Activated CD8-positive, alpha-beta T cell treated with anti-CD3 and anti-CD28 coated beads for 36 hours (primary cell): ENCODE measurements at regions of chr1 and their contacts with region 1.

Region 1: DNA sequence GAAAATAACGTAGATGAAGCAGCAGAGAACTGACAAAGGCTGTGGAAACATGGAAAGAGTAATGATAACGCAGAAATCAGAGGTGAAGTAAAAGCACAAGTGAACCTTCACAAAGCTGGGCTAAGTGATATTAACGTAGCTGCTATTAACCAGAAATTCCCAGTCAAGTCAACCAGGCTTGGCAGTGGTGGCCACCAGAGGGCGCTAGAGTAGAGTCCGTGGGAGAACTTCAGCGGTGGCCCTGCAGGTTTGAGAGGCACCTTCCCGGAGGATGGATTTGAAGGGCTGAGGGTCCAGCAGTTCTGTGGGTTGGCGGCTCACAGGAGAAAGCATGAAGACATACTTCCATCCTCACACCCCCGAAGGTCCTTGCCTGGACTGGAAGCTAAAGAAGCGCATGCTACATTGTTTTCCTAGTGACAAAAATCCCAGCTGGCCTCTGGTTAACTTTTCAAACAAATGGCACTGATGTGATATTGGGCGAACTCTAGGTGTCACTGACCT is 81.7 kb upstream of the ZNF648 start:
- DNase-seq: peak; percentile 91
- ATAC-seq: peak; percentile 58
- H3K4me3 Mint-ChIP-seq: no peak overlapping the region
- H3K27ac Mint-ChIP-seq: no peak overlapping the region
- H3K4me1 Mint-ChIP-seq: peaks cover 8% of the 10 kb centered on the region
- H3K27me3 Mint-ChIP-seq: peaks cover 6% of the 10 kb centered on the region
- CTCF ChIP-seq: peak; percentile 89

Region 2: DNA sequence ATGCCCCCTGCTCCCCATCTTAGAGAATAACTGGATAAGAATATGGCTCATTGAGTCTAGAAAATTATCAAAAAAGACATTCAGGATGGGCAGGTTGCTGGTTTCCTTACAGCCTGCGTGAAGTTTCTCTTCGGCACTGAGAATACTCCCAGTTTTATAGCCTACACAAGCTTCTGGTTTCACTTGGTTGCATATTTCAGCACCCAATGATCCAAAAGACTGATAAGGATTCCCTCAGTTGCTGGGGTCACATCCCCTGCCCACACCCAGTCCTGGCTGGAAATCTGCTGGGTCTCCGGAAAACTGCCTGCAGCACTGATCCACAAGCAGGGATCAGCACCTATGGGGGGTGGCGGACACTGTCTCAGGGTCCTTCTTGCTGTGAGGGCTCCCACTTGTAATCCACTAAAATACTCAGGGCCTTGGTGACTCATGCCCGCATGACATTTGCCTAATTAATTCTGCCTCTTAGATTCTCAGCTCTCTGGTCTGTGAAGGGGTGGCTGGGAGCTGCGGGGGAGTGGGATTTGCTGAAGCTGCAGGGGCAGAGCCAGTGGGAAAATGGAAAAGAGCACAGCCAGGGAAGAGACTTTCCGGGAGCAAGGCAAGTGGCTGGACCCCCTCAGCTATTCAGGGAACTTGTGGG is 224.2 kb before region 1 on chr1:
- CTCF ChIA-PET with region 1: no interaction called
- POLR2A ChIA-PET with region 1: no interaction called
- intact Hi-C with region 1: no loop called
- DNase-seq: no peak
- ATAC-seq: no peak
- H3K4me3 Mint-ChIP-seq: no peak overlapping the region
- H3K27ac Mint-ChIP-seq: no peak overlapping the region
- H3K4me1 Mint-ChIP-seq: no peaks in the 10 kb centered on the region
- H3K27me3 Mint-ChIP-seq: peaks cover 6% of the 10 kb centered on the region
- CTCF ChIP-seq: no peak

Region 3: DNA sequence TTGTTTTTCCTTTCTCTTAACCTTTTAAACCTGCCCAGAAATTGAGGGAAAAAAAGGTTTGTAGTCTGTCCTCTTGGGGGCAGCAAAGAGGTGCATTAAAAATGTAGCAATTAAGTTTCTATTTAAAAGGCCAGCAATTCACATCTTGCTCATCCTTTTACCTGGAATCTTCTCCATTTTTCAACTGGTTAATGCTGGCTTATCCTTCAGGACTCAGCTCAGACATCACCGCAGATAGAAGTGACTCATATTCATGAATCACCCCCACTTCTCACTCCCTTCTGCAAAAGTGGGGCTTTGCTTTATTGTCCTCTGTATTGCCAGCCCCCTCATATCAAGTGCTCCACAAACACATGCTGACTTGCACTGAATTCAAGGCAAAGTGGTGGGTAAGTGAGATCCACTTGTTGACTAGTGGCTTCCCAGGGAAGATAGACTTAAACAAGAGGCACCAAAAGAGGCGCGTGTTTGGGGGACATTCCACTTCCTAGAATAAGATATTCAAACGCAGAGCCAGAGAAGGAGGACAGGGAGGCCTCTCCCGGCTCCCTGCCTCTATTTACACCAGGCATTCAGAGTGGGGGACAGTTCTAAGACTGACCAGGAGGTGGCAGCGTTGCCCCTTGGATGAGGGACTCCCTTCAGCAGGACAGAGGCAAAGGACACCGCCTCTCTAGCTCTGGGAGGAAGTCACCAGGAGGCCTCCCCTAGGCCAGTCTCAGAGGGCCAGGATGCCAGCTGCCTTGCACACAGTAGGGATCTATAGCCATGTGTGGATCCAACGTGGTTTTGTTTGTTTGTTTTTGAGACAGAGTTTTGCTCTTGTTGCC is 58.5 kb before region 1 on chr1:
- CTCF ChIA-PET with region 1: interaction called, 51 read pairs
- POLR2A ChIA-PET with region 1: no interaction called
- intact Hi-C with region 1: no loop called
- DNase-seq: peak; percentile 89
- ATAC-seq: peak; percentile 95
- H3K4me3 Mint-ChIP-seq: no peak overlapping the region
- H3K27ac Mint-ChIP-seq: no peak overlapping the region
- H3K4me1 Mint-ChIP-seq: peaks cover 25% of the 10 kb centered on the region
- H3K27me3 Mint-ChIP-seq: no peaks in the 10 kb centered on the region
- CTCF ChIP-seq: peak; percentile 85

Region 4: DNA sequence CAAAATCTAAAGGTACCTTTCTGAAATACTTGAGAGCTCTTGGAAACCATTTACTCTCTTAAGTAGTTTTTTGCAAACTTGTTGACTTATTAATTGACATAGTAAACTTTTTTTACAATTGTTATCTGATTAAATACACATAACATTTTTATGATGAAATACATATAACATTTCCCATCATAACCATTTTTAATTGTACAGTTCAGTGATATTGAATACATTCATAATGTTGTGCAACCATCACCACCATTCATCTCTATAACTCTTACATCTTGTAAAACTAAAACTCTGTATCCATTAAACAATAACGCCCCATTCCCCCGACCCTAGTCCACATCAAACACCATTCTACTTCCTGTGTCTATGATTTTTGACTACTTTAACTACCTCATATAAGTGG is 14.0 kb after region 1 on chr1:
- CTCF ChIA-PET with region 1: interaction called, 22 read pairs
- POLR2A ChIA-PET with region 1: no interaction called
- intact Hi-C with region 1: no loop called
- DNase-seq: no peak
- ATAC-seq: no peak
- H3K4me3 Mint-ChIP-seq: no peak overlapping the region
- H3K27ac Mint-ChIP-seq: no peak overlapping the region
- H3K4me1 Mint-ChIP-seq: peaks cover 5% of the 10 kb centered on the region
- H3K27me3 Mint-ChIP-seq: no peaks in the 10 kb centered on the region
- CTCF ChIP-seq: no peak

Region 5: DNA sequence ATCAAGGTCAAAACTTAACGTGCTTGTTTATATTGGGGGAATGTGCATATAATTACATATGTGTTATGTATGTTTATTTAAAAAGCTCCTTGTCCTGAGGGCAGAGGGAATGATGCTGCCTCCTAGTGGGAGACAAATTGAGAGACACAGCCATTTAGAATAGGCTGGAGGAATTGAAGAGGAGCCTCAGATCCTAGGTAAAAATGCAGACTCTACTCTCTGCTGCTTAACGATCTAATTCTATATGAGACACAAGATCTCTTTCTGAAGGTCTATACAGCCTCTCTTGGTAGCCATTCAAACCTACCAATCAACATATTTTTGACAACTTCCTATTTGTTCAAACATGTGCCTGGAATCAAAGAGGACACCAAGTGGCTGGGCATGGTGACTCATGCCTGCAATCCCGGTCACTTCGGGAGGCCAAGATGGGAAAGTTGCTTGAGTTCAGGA is 54.9 kb after region 1 on chr1:
- CTCF ChIA-PET with region 1: interaction called, 13 read pairs
- POLR2A ChIA-PET with region 1: no interaction called
- intact Hi-C with region 1: no loop called
- DNase-seq: no peak
- ATAC-seq: no peak
- H3K4me3 Mint-ChIP-seq: no peak overlapping the region
- H3K27ac Mint-ChIP-seq: no peak overlapping the region
- H3K4me1 Mint-ChIP-seq: no peaks in the 10 kb centered on the region
- H3K27me3 Mint-ChIP-seq: no peaks in the 10 kb centered on the region
- CTCF ChIP-seq: no peak

Region 6: DNA sequence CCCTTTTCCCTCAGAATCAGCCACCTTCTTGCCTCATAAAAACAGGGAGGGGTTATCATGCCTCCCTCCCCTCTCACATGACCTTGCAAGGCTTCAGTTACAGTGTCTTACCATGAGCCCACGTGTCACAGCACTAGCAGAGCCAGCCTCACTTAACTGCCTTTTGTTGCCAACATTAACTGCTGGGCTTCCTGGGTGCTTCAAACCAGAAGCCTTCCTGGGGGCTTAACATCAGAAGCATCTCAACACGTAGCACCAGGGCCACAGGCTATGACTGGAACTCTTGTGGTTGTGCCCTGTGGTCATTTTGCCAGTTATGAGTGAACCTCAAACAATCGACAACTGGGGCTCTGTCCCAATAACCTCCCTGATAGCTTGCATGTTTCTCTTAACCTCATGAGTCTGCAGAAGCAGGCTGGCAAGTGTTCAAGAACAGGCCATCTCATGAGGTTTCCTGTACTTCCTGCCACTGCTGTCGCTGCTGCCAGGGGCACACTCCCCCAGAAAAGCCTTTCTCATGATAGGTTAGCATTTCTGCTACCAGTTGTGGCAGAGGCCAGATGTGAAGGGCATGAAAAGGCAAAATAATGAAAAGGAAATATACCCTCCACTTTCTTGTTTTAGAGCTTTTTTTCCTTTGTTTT is 116.1 kb after region 1 on chr1:
- CTCF ChIA-PET with region 1: interaction called, 13 read pairs
- POLR2A ChIA-PET with region 1: no interaction called
- intact Hi-C with region 1: no loop called
- DNase-seq: peak; percentile 87
- ATAC-seq: peak; percentile 88
- H3K4me3 Mint-ChIP-seq: peak overlapping the region; percentile 7
- H3K27ac Mint-ChIP-seq: peak overlapping the region; percentile 94
- H3K4me1 Mint-ChIP-seq: peaks cover 27% of the 10 kb centered on the region
- H3K27me3 Mint-ChIP-seq: no peaks in the 10 kb centered on the region
- CTCF ChIP-seq: no peak

Region 7: GRCh38 chr1:182381962-182382819 is 239.0 kb after region 1 on chr1:
- CTCF ChIA-PET with region 1: interaction called, 19 read pairs
- POLR2A ChIA-PET with region 1: no interaction called
- intact Hi-C with region 1: no loop called
- DNase-seq: no peak
- ATAC-seq: no peak
- H3K4me3 Mint-ChIP-seq: no peak overlapping the region
- H3K27ac Mint-ChIP-seq: no peak overlapping the region
- H3K4me1 Mint-ChIP-seq: no peaks in the 10 kb centered on the region
- H3K27me3 Mint-ChIP-seq: no peaks in the 10 kb centered on the region
- CTCF ChIP-seq: no peak